Gastrocnemius medialis (tissue), 4 donors: ENCODE measurements at regions of chr15 and their contacts with region 1.

Region 1: DNA sequence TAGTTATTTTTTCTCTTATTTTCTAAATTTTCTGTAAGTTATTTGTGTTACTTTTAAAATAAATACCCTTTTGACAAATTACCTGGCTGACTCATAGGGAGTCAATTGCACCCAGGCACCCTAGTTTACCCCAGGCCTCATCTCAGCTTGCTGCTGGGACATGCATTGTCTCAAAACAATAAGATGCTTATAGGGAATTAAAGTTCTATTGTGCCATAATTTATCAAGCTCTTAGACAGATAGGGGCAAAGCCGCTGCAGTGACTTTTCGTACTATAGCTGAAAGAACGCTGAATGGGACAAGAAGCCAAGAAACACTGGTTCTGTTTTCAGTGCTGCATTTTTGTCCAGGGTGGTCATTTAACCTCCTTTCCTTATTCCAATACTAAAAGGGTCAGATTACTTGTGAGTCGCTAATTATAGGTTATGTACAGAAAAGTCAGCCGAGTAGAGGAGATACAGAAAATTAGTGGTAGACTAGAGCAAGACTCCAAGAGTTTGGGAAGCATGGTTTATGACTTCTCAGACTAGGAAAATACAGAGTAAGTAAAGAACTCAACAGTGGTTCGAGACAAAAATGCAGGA is 50.3 kb downstream of the EXD1 start:
- DNase-seq: no peak
- ATAC-seq: no peak
- H3K4me3 ChIP-seq: no peak overlapping the region
- H3K27ac ChIP-seq: no peak overlapping the region
- H3K4me1 ChIP-seq: no peaks in the 10 kb centered on the region
- H3K27me3 ChIP-seq: no peaks in the 10 kb centered on the region
- CTCF ChIP-seq: no peak
- POLR2A ChIP-seq: no peak

Region 2: GRCh38 chr15:40857601-40858341 is 322.5 kb before region 1 on chr15:
- in situ Hi-C with region 1: no loop called
- intact Hi-C with region 1: loop called (anchors 2 kb)
- DNase-seq: peak in 1 of 2 donors; percentile 54
- ATAC-seq: peak; percentile 82 to 90
- H3K4me3 ChIP-seq: no peak overlapping the region
- H3K27ac ChIP-seq: no peak overlapping the region
- H3K4me1 ChIP-seq: no peaks in the 10 kb centered on the region
- H3K27me3 ChIP-seq: no peaks in the 10 kb centered on the region
- CTCF ChIP-seq: peak; percentile 76 to 93 (median 91)
- POLR2A ChIP-seq: no peak